Endothelial cell of umbilical vein (primary cell): ENCODE measurements at regions of chr5 and their contacts with region 1.

Region 1: DNA sequence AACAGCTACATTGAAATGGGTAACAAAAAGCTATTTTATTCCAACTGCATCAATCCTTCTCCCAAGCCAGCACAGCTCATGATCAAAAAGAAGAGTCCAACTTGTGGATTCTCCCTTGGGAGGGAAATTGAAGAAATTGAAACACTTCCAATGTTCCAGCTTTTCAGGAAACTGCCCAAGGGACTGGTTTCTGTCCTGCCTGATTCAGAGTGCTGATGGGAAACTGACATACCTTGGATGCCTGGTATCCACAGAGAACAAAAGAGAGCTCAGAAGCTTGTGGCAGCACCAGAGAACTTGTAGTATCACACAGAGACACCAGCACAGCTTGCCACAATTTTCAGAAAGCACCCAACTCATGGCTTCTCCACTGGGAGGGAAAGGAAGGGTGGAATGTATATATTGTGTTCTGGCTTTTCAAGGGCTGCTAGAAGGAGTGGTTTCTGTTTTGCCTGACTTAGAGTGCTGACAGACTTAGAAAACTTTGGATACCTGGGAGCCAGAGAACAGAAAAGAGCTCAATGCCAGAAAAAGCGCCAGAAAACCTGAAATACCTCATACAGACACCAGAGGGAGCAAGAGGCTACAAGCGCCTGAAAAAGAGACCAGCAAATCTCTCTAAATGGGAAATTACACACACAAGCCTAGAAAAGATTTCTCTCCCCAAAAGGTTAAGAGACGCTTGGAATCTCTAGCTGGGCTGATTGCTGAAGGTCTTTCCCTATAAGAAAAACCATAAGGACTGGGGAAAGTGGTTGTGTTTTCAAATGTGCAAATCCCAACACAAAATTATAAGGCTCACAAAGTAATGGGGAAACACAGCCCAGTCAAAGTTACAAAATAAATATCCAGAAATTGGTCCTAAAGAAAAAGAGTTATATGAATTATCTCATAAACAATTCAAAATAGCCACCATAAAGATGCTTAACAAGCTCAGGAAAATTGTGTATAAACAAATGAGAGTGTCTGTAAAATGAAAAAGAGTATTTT is 178.8 kb downstream of the SPOCK1 start:
- DNase-seq: peak; percentile 79
- H3K4me3 ChIP-seq: no peak overlapping the region
- H3K27ac ChIP-seq: no peak overlapping the region
- H3K4me1 ChIP-seq: peaks cover 6% of the 10 kb centered on the region
- H3K27me3 ChIP-seq: no peaks in the 10 kb centered on the region
- CTCF ChIP-seq: peak; percentile 72 to 77
- POLR2A ChIP-seq: no peak

Region 2: GRCh38 chr5:135916638-135917254 is 1403.6 kb before region 1 on chr5:
- CTCF ChIA-PET with region 1: no interaction called
- POLR2A ChIA-PET with region 1: no interaction called
- dilution Hi-C with region 1: no loop called
- intact Hi-C with region 1: no loop called
- DNase-seq: no peak
- H3K4me3 ChIP-seq: no peak overlapping the region
- H3K27ac ChIP-seq: no peak overlapping the region
- H3K4me1 ChIP-seq: no peaks in the 10 kb centered on the region
- H3K27me3 ChIP-seq: peaks cover 8 to 37% of the 10 kb centered on the region in 2 experiments
- CTCF ChIP-seq: no peak
- POLR2A ChIP-seq: no peak

Region 3: DNA sequence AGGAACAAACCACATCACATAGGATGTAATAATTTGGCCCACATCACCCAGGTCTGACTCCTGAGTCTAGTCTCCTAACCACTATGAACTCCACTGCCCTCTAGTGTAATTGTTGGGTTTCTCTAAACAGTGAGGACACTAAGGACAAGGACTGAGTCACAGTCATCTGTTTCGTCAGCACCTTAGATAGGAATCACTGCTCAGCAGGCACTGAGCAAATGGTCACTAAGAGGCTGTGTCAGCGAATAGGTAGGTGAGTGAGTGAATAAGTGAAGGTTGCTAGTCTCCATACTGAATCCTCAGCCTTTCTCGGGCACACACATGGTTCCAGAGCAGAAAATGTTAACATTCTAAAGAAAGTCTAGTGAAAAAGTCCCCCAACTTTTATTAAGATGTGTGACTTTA is 99.8 kb before region 1 on chr5:
- CTCF ChIA-PET with region 1: interaction called, 10 read pairs
- POLR2A ChIA-PET with region 1: no interaction called
- dilution Hi-C with region 1: no loop called
- intact Hi-C with region 1: no loop called
- DNase-seq: peak; percentile 80
- H3K4me3 ChIP-seq: no peak overlapping the region
- H3K27ac ChIP-seq: no peak overlapping the region
- H3K4me1 ChIP-seq: no peaks in the 10 kb centered on the region
- H3K27me3 ChIP-seq: no peaks in the 10 kb centered on the region
- CTCF ChIP-seq: peak; percentile 61 to 62
- POLR2A ChIP-seq: no peak

Region 4: GRCh38 chr5:137336565-137337120 is 16.3 kb after region 1 on chr5:
- CTCF ChIA-PET with region 1: interaction called, 172 read pairs
- POLR2A ChIA-PET with region 1: no interaction called
- dilution Hi-C with region 1: no loop called
- intact Hi-C with region 1: no loop called
- DNase-seq: no peak
- H3K4me3 ChIP-seq: no peak overlapping the region
- H3K27ac ChIP-seq: no peak overlapping the region
- H3K4me1 ChIP-seq: peaks cover 5% of the 10 kb centered on the region
- H3K27me3 ChIP-seq: no peaks in the 10 kb centered on the region
- CTCF ChIP-seq: no peak
- POLR2A ChIP-seq: no peak

Region 5: DNA sequence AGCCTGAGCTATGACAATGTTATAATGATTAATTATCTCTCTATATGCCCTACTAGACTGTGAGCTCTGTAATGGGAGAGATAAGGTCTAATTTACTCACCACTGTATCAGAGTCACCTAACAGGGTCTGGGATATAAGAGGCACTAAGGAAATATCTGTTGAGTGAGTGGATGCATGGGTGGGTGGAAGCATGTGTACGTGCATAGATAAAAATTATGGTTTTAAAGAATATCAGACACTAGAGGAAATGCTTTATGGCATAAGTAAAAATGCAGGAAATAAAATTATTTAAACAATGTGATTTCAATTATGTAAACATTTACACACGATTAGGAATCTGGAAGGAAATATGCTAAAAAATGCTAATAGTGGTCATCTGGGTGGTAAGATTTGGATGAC is 40.9 kb after region 1 on chr5:
- CTCF ChIA-PET with region 1: interaction called, 11 read pairs
- POLR2A ChIA-PET with region 1: interaction called, 3 read pairs
- dilution Hi-C with region 1: no loop called
- intact Hi-C with region 1: loop called (anchors 1 kb)
- DNase-seq: peak; percentile 94
- H3K4me3 ChIP-seq: no peak overlapping the region
- H3K27ac ChIP-seq: peak overlapping the region; percentile 100
- H3K4me1 ChIP-seq: peaks cover 40% of the 10 kb centered on the region
- H3K27me3 ChIP-seq: no peaks in the 10 kb centered on the region
- CTCF ChIP-seq: no peak
- POLR2A ChIP-seq: peak; percentile 53

Region 6: DNA sequence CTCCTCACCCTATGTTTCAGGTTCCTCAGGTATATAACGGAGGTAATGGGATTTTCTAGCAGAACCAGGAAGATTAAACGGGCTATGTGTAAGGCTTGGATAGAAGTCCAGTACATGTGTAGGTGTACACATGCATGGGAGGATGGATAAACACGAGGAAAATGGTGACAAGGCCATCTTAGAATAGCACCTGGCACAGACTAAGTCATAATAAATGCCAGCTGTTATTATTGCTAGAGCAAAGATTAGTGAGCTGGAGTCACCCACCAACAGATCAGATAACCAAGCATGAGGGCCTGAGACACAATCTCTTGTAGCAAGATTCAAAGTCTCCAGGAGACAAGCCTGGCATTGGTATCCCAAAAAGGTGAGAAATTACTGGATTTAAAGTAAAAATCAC is 157.7 kb after region 1 on chr5:
- CTCF ChIA-PET with region 1: interaction called, 13 read pairs
- POLR2A ChIA-PET with region 1: no interaction called
- dilution Hi-C with region 1: no loop called
- intact Hi-C with region 1: no loop called
- DNase-seq: no peak
- H3K4me3 ChIP-seq: no peak overlapping the region
- H3K27ac ChIP-seq: no peak overlapping the region
- H3K4me1 ChIP-seq: no peaks in the 10 kb centered on the region
- H3K27me3 ChIP-seq: no peaks in the 10 kb centered on the region
- CTCF ChIP-seq: no peak
- POLR2A ChIP-seq: no peak

Region 7: GRCh38 chr5:137504916-137505315 is 184.6 kb after region 1 on chr5:
- CTCF ChIA-PET with region 1: interaction called, 29 read pairs
- POLR2A ChIA-PET with region 1: no interaction called
- dilution Hi-C with region 1: no loop called
- intact Hi-C with region 1: no loop called
- DNase-seq: no peak
- H3K4me3 ChIP-seq: no peak overlapping the region
- H3K27ac ChIP-seq: no peak overlapping the region
- H3K4me1 ChIP-seq: no peaks in the 10 kb centered on the region
- H3K27me3 ChIP-seq: peaks cover 21 to 22% of the 10 kb centered on the region in 2 experiments
- CTCF ChIP-seq: no peak
- POLR2A ChIP-seq: no peak

Region 8: DNA sequence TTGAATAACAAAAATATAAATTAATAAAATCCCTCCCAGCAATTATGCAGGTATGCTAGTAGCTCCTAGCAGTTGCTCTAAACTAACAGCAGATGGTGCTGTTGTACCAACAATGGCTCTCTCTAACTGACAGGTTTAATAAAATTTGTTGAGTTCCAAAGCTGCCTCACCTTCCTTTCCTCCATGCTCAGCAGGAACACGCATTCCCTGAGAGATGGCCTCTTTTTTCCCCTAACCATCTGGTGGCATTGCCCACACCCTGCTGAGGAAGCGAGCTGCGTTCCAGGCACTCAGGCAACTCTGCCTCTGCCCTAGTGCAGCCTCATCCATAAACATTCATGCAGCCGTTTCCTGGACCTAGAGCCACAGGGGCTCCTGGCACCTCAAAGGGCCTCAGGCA is 309.3 kb after region 1 on chr5:
- CTCF ChIA-PET with region 1: interaction called, 14 read pairs
- POLR2A ChIA-PET with region 1: no interaction called
- dilution Hi-C with region 1: no loop called
- intact Hi-C with region 1: no loop called
- DNase-seq: peak; percentile 60
- H3K4me3 ChIP-seq: no peak overlapping the region
- H3K27ac ChIP-seq: no peak overlapping the region
- H3K4me1 ChIP-seq: peaks cover 3% of the 10 kb centered on the region
- H3K27me3 ChIP-seq: no peaks in the 10 kb centered on the region
- CTCF ChIP-seq: peak; percentile 62 to 76
- POLR2A ChIP-seq: no peak

Region 9: GRCh38 chr5:137672019-137672418 is 351.7 kb after region 1 on chr5:
- CTCF ChIA-PET with region 1: no interaction called
- POLR2A ChIA-PET with region 1: no interaction called
- dilution Hi-C with region 1: no loop called
- intact Hi-C with region 1: no loop called
- DNase-seq: no peak
- H3K4me3 ChIP-seq: no peak overlapping the region
- H3K27ac ChIP-seq: no peak overlapping the region
- H3K4me1 ChIP-seq: no peaks in the 10 kb centered on the region
- H3K27me3 ChIP-seq: no peaks in the 10 kb centered on the region
- CTCF ChIP-seq: no peak
- POLR2A ChIP-seq: no peak